Activated CD4-positive, alpha-beta memory T cell treated with anti-CD3 and anti-CD28 coated beads for 36 hours (primary cell): ENCODE measurements at regions of chr1 and their contacts with region 1.

Region 1: GRCh38 chr1:81834921-81835698 is 34.4 kb downstream of the ADGRL2 start:
- DNase-seq: no peak
- H3K4me3 Mint-ChIP-seq: no peak overlapping the region
- H3K27ac Mint-ChIP-seq: no peak overlapping the region
- H3K4me1 Mint-ChIP-seq: no peaks in the 10 kb centered on the region
- H3K27me3 Mint-ChIP-seq: no peaks in the 10 kb centered on the region

Region 2: GRCh38 chr1:79899914-79900313 is 1935.2 kb before region 1 on chr1:
- CTCF ChIA-PET with region 1: no interaction called
- POLR2A ChIA-PET with region 1: no interaction called
- intact Hi-C with region 1: loop called (anchors 10 kb)
- DNase-seq: no peak
- H3K4me3 Mint-ChIP-seq: no peak overlapping the region
- H3K27ac Mint-ChIP-seq: no peak overlapping the region
- H3K4me1 Mint-ChIP-seq: no peaks in the 10 kb centered on the region
- H3K27me3 Mint-ChIP-seq: no peaks in the 10 kb centered on the region

Region 3: GRCh38 chr1:82001345-82001744 is 166.2 kb after region 1 on chr1:
- CTCF ChIA-PET with region 1: no interaction called
- POLR2A ChIA-PET with region 1: no interaction called
- intact Hi-C with region 1: no loop called
- DNase-seq: no peak
- H3K4me3 Mint-ChIP-seq: no peak overlapping the region
- H3K27ac Mint-ChIP-seq: no peak overlapping the region
- H3K4me1 Mint-ChIP-seq: no peaks in the 10 kb centered on the region
- H3K27me3 Mint-ChIP-seq: no peaks in the 10 kb centered on the region